ENCODE measurements at regions of chr20 and their contacts with region 1.

Region 1: GRCh38 chr20:36491901-36492617 is 49.3 kb upstream of the MYL9 start:
- DNase-seq: peak; percentile 9 to 80 (median 61)
- ATAC-seq: peak; percentile 94
- H3K4me3 ChIP-seq: peak overlapping the region; percentile 4 to 16
- H3K4me3 Mint-ChIP-seq: peak overlapping the region; percentile 65
- H3K27ac ChIP-seq: peak overlapping the region in 1 of 2 experiments; percentile 84
- H3K27ac Mint-ChIP-seq: peak overlapping the region; percentile 92
- H3K4me1 ChIP-seq: peaks cover 32% of the 10 kb centered on the region
- H3K4me1 Mint-ChIP-seq: peaks cover 37% of the 10 kb centered on the region
- H3K27me3 ChIP-seq: no peaks in the 10 kb centered on the region
- H3K27me3 Mint-ChIP-seq: no peaks in the 10 kb centered on the region
- CTCF ChIP-seq: no peak

Region 2: DNA sequence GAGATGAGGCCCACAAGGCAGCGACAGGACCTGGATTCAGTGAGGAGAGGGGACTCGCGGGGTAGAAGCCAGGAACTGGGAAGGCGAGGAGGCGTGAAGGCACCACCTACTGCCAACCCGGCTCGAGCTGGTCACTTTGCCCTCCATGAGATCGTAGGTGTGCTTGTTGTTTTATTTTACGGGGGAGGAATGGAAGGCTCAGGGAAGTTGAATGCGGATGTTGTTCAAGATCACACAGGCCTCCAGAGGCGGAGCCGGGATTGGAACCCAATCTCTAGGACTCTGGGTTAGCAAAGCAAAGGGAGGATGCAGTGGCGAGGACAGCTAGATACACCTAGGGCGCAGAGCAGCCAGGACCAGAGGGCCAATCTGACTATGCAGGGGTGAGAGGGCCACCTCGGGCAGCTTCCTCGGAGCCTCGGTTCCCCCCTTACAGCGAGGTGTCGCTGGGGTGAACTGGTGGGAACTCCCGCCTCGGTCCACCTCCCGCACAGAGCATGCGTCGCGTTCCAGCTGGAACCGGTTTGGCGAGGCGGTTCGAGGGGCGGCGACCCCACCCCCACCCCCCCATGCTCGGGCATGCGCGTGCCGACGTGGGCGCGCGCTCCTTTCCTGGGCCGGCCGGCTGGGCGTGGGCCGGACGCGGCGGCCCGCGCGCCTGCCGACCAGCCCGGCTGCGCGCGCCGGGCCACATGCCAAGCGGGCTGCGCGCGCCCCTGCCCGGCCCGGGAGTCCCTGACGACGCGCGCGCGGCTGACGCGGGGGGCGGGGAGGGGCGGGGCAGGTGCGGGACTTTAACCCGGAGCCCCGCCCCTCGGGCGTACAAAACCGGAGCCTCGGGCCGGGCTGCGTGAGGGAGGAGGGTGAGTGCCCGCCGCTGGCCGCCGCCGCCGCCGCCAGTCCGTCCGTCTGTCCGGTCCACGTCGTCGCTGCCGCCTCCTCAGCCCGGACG is 31.1 kb before region 1 on chr20:
- CTCF ChIA-PET with region 1: interaction called, 3 read pairs
- POLR2A ChIA-PET with region 1: no interaction called
- intact Hi-C with region 1: loop called (anchors 1 kb)
- DNase-seq: peak; percentile 78 to 97 (median 89)
- ATAC-seq: peak; percentile 83
- H3K4me3 ChIP-seq: peak overlapping the region; percentile 47 to 52
- H3K4me3 Mint-ChIP-seq: peak overlapping the region; percentile 80
- H3K27ac ChIP-seq: peak overlapping the region; percentile 69 to 90
- H3K27ac Mint-ChIP-seq: peak overlapping the region; percentile 89
- H3K4me1 ChIP-seq: peaks cover 45% of the 10 kb centered on the region
- H3K4me1 Mint-ChIP-seq: peaks cover 44% of the 10 kb centered on the region
- H3K27me3 ChIP-seq: no peaks in the 10 kb centered on the region
- H3K27me3 Mint-ChIP-seq: no peaks in the 10 kb centered on the region
- CTCF ChIP-seq: no peak

Measured in CD8-positive, alpha-beta T cell (primary cell).